A549 (cell line): ENCODE measurements at regions of chr19 and their contacts with region 1.

Region 1: DNA sequence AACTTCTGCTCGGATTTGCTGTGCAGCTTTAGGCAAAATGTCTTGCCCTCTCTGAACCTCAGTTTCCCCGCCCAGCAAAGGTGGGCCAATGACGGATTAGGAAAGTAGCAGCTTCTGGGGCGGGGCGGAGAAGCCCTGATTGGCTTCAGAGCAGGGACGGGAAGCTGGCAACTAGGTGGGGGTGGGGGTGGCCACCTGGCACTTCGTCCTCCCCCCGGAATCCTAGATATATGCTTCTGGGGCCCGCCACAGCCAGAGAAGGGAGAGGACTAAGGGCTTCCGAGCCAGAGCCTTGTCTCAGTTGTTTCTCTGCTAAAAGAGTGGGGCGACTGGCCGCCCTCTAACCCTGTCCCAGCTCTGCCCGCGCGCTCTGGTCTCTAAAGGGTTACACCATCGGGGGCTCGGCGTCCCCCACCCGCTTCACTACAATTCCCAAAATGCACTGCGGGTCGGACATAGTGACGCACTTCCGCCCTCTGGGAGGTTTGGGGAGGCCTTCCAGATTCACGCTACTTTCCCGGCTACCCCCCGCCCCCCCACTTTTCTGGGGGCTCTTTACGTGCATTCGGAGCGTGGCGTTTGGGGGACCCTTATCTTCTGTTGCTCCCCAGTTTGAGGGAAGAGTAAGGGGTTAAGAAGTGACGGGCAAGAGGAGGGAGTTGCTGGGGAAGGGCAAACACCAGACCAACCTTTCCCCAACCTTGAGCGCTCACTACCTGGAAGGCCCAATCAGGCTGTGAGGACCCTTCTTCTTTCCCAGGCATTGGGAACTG is 672 bp upstream of the IRF2BP1 start:
- DNase-seq: peak; percentile 97 to 98
- ATAC-seq: peak; percentile 63 to 78
- H3K4me3 ChIP-seq: peak overlapping the region; percentile 87
- H3K27ac ChIP-seq: peak overlapping the region; percentile 95 to 97
- H3K4me1 ChIP-seq: peaks cover 37% of the 10 kb centered on the region
- CTCF ChIP-seq: no peak
- EP300 ChIP-seq: no peak
- POLR2A ChIP-seq: peak; percentile 37
- RAD21 ChIP-seq: no peak

Region 2: GRCh38 chr19:45770192-45771101 is 116.2 kb before region 1 on chr19:
- CTCF ChIA-PET with region 1: interaction called, 22 read pairs
- POLR2A ChIA-PET with region 1: interaction called, 4 read pairs
- DNase-seq: peak; percentile 99 to 100
- ATAC-seq: peak; percentile 49 to 83
- H3K4me3 ChIP-seq: peak overlapping the region; percentile 45
- H3K27ac ChIP-seq: peak overlapping the region; percentile 71 to 87
- H3K4me1 ChIP-seq: peaks cover 18% of the 10 kb centered on the region
- CTCF ChIP-seq: peak; percentile 96
- EP300 ChIP-seq: no peak
- POLR2A ChIP-seq: peak; percentile 32
- RAD21 ChIP-seq: peak; percentile 78 to 92

Region 3: DNA sequence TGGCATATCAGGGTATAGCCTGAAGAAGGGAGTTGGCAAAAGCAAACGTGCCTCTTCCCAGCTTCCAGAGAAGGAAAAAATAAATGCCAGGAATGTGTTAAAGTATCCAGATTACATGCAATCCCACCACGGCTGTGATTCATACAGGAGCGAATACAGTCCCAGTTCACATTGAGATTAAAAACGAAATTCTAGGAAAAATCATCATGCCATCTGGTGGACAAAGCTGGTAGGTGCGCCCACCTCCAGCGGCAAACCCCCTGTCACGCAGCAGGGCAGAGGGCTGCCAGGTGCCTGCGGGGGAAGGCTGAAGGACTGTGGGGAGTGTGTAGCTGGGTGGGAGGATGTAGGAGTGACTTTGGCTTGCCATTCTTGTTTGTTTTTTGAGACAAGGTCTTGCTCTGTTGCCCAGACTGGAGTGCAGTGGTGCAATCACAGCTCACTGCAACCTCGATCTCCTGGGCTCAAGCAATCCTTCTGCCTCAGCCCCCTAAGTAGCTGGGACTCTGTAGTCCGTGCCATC is 87.6 kb before region 1 on chr19:
- CTCF ChIA-PET with region 1: interaction called, 10 read pairs
- POLR2A ChIA-PET with region 1: no interaction called
- DNase-seq: peak; percentile 68 to 94
- ATAC-seq: peak; percentile 85 to 94
- H3K4me3 ChIP-seq: no peak overlapping the region
- H3K27ac ChIP-seq: peak overlapping the region in 1 of 2 experiments; percentile 66; a peak in 2 of 6 replicates
- H3K4me1 ChIP-seq: peaks cover 18% of the 10 kb centered on the region
- CTCF ChIP-seq: peak; percentile 92
- EP300 ChIP-seq: no peak
- POLR2A ChIP-seq: no peak
- RAD21 ChIP-seq: peak; percentile 79

Region 4: DNA sequence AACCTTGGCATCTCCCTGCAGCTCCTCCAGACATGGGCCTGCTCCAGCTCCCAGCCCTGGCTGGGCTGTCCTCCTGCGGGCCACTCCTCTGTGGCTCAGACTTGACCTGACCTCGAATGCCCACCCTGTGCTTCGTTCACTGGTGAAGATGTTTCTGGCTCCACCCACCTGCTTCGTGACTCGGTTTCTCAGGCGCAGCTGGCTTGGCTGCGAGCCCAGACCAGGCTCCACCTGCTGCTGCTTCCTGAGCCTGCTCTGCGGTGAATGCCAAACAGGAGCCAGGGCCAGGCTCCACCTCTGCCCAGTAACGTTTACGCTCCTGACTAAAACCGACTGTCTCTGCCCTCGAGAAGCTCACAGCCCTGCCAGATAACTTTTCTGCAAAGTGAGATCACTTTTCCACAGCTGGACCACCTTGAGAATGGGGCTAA is 62.6 kb before region 1 on chr19:
- CTCF ChIA-PET with region 1: interaction called, 151 read pairs
- POLR2A ChIA-PET with region 1: no interaction called
- DNase-seq: no peak
- ATAC-seq: no peak
- H3K4me3 ChIP-seq: no peak overlapping the region
- H3K27ac ChIP-seq: no peak overlapping the region
- H3K4me1 ChIP-seq: no peaks in the 10 kb centered on the region
- CTCF ChIP-seq: no peak
- EP300 ChIP-seq: no peak
- POLR2A ChIP-seq: no peak
- RAD21 ChIP-seq: no peak

Region 5: DNA sequence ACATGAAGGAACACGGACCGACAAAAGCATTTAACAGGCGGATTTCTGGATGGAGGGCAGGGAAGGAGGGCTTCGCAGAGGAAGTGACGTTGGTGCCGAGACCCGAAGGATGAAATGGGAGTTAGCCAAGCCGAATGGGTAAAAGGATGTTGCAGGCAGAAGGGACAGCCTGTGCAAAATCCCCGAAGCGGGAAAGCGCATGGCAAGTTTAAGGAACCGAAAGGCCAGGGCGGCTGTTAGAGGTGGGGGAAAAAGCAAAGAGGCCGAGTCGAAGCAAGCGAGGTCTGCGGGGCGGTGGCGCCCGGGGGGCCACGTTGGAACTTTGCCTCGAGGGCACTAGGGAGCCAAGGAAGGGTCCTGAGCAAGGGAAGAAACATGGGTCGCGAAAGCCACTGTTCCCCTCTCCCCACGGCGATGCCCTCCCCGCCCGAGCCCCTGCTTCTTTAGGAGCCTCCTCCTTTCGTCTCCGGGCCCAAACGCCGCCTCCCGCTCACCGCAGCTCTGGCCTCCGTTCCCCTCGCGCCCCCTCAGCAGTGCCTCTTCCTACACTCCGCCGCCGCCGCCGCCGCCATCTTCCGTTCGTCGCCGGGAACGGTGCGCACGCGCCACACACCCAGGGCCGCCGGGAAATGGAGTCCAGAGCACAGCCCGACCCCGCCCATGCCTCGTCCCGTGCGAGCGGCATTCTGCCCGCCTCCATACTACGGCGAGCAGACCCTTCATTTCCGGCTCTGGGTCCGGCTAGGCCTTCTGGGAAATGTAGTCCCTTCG is 23.9 kb before region 1 on chr19 and contains the start of gene SYMPK:
- CTCF ChIA-PET with region 1: interaction called, 315 read pairs
- POLR2A ChIA-PET with region 1: interaction called, 30 read pairs
- DNase-seq: peak; percentile 99 to 100
- ATAC-seq: peak; percentile 92 to 96
- H3K4me3 ChIP-seq: peak within 1 kb of the TSS; percentile 71
- H3K27ac ChIP-seq: peak within 1 kb of the TSS; percentile 88
- H3K4me1 ChIP-seq: peaks cover 25% of the 10 kb centered on the region
- CTCF ChIP-seq: no peak
- EP300 ChIP-seq: no peak; a peak in 1 of 5 replicates
- POLR2A ChIP-seq: peak; percentile 59
- RAD21 ChIP-seq: no peak
- polyA plus RNA-seq, gene SYMPK: 92.6 and 105 TPM in 2 replicates

Region 6: GRCh38 chr19:45902651-45903625 is 16.3 kb after region 1 on chr19:
- CTCF ChIA-PET with region 1: interaction called, 29 read pairs
- POLR2A ChIA-PET with region 1: interaction called, 23 read pairs
- DNase-seq: peak; percentile 98 to 100
- ATAC-seq: peak; percentile 86 to 95
- H3K4me3 ChIP-seq: peak overlapping the region; percentile 78
- H3K27ac ChIP-seq: peak overlapping the region; percentile 89 to 93
- H3K4me1 ChIP-seq: peaks cover 17% of the 10 kb centered on the region
- CTCF ChIP-seq: no peak
- EP300 ChIP-seq: no peak
- POLR2A ChIP-seq: peak; percentile 94
- RAD21 ChIP-seq: no peak

Region 7: GRCh38 chr19:46124638-46125115 is 238.1 kb after region 1 on chr19 and contains the start of gene IGFL3:
- CTCF ChIA-PET with region 1: no interaction called
- POLR2A ChIA-PET with region 1: no interaction called
- DNase-seq: no peak
- ATAC-seq: no peak; a peak in 1 of 6 replicates
- H3K4me3 ChIP-seq: no peak within 1 kb of the TSS
- H3K27ac ChIP-seq: no peak within 1 kb of the TSS
- H3K4me1 ChIP-seq: no peaks in the 10 kb centered on the region
- CTCF ChIP-seq: no peak
- EP300 ChIP-seq: no peak
- POLR2A ChIP-seq: no peak
- RAD21 ChIP-seq: no peak
- polyA plus RNA-seq, gene IGFL3: 0.16 TPM in 1 of 2 replicates, not detected in the other